Right ventricle myocardium inferior (tissue), 1 donor: ENCODE measurements at regions of chr1 and their contacts with region 1.

Region 1: DNA sequence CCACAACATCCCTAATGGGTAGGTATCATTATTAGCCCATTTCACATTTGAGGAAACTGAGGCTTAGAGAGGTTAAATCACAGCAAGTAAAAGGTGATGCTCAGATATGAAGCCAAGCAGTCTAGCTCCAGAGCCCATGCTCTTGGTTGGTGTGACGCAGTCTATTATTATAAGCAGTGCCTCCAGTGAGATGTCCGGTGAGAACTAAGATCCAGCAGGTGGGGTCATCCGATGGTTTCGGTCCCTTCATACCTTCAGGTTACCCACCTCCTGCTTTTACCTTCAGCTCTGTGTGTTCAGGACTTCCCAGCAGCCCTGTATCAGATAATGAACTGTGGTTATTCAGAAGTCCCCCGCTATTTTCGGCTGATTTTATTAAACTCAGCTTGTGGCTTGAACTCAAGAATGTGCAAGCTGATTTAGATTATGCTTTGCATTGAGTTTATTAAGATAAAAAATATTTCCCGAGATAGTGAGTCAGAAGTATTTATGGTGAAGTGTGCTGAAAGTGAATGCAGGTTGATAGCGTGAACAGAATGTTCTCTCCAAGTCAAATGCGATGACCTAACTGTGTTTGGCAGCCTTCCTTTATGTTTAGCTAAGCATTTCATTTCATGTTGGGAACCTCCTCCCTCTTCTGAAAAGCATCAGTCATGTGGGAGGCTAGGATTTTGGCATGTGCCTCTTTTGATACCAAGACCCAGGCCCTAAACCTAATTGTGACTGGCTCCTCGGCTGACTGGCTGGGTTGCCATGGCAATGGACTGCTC is 160.9 kb upstream of the UBE2U start:
- DNase-seq: no peak
- ATAC-seq: peak; percentile 84

Region 2: GRCh38 chr1:63691701-63692425 is 350.7 kb before region 1 on chr1:
- intact Hi-C with region 1: loop called (anchors 10 kb)
- DNase-seq: no peak
- ATAC-seq: peak; percentile 91

Region 3: DNA sequence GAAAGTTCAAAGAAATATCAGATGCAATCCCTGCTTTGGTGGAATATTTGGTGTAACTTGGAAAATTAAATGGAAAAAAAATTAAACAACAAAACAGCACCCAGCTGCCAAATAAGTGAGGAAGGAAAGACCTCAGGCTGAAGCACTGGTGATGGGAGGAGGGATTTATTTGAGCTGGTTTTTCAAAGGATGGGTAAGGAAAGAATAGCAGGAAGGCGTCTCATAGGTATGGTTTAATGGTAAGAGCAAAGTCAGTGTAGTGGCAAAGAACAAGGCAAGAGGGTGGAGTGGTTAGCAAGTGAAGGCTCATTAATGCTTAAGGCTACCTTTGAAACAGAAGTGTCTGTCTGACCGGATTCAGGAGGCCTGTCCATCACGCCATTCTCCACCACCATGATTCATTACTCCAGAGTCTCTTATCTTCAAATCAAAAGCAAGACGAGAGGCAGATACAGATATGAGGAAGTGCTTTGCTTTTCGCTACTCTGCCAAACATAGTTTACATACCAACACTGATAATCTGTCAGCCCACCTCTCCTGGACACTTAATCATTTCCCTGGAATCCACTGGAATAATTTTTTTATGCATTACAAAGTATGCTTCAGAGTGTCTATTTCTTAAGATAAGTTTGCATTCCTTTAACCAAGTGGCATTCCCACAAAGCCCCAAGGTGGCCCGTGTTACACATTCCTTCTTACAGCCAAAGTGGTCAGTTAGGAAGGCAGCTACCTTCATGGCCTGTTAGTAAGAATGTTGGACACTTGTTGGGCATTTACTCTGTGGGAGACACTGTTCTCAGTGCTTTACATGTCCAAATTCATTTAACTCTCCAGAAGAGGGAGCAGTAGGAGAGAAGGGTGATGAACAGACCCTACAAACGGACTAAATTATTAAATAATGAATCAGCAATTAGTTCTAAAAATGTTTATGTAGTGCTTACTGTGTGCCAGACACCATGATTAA is 122.1 kb before region 1 on chr1:
- intact Hi-C with region 1: loop called (anchors 5 kb)
- DNase-seq: no peak
- ATAC-seq: no peak

Region 4: GRCh38 chr1:63967901-63968300 is 74.6 kb before region 1 on chr1:
- intact Hi-C with region 1: no loop called
- DNase-seq: no peak
- ATAC-seq: no peak

Region 5: GRCh38 chr1:64072089-64072793 is 29.7 kb after region 1 on chr1:
- intact Hi-C with region 1: no loop called
- DNase-seq: no peak
- ATAC-seq: peak; percentile 29